PC-3 (cell line): ENCODE measurements at regions of chrX and their contacts with region 1.

Region 1: DNA sequence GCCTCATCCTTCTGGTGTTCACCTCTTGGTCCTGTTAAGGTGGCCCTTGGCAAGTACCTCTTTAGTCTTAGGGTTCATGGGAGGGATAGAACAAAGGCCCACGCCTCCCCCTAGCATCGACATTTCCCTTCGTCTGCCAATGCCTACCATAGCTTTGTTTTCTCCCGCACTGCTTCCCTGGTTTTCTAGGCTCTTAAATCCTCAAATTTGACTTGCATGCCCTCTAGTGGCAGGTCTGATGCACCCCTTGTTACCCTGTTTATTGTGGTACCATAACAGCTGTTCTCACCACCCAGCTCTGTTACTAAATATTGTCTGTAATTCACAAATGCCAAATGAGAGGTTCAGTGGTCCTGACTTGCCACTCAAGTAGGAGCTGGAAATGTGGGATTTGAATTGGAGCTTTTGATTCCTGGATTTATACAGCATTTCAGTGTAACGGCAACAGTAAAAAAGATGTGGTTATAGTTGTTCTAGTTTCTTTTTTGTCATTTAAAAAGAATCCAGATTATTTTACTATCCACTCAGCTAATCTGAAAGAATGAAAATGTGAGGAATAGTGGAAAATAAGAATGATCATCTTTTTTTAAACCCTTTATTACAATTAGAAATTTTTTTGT is 100.1 kb downstream of the REPS2 start:
- DNase-seq: peak; percentile 77
- ATAC-seq: peak; percentile 85
- H3K4me3 ChIP-seq: no peak overlapping the region
- H3K27ac ChIP-seq: no peak overlapping the region
- H3K4me1 ChIP-seq: no peaks in the 10 kb centered on the region
- H3K27me3 ChIP-seq: no peaks in the 10 kb centered on the region
- CTCF ChIP-seq: peak; percentile 83

Region 2: DNA sequence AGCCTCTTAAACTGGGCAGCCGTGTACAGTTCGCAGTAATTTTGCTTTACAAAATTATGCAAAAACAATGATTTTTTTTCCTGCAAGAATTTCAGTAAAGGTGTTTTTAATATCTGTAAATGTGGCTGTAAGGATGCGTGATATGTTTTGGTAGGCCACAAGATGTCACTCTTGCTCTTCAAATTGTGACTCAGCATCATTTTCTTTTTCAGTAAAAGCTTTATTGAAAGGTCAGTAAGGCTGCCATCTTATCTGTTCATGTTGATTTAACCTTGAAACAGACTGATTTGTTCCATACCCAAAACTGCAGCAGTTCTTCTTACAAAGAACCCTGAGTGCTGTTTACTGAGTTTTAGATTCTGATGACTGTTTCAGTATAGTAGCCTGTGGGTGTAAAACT is 220.4 kb before region 1 on chrX:
- CTCF ChIA-PET with region 1: no interaction called
- POLR2A ChIA-PET with region 1: interaction called, 8 read pairs
- intact Hi-C with region 1: loop called (anchors 2 kb)
- DNase-seq: peak; percentile 54
- ATAC-seq: peak; percentile 20; the same call in 1 of the 2 replicates
- H3K4me3 ChIP-seq: no peak overlapping the region
- H3K27ac ChIP-seq: peak overlapping the region; percentile 77
- H3K4me1 ChIP-seq: peaks cover 40% of the 10 kb centered on the region
- H3K27me3 ChIP-seq: no peaks in the 10 kb centered on the region
- CTCF ChIP-seq: peak; percentile 70

Region 3: DNA sequence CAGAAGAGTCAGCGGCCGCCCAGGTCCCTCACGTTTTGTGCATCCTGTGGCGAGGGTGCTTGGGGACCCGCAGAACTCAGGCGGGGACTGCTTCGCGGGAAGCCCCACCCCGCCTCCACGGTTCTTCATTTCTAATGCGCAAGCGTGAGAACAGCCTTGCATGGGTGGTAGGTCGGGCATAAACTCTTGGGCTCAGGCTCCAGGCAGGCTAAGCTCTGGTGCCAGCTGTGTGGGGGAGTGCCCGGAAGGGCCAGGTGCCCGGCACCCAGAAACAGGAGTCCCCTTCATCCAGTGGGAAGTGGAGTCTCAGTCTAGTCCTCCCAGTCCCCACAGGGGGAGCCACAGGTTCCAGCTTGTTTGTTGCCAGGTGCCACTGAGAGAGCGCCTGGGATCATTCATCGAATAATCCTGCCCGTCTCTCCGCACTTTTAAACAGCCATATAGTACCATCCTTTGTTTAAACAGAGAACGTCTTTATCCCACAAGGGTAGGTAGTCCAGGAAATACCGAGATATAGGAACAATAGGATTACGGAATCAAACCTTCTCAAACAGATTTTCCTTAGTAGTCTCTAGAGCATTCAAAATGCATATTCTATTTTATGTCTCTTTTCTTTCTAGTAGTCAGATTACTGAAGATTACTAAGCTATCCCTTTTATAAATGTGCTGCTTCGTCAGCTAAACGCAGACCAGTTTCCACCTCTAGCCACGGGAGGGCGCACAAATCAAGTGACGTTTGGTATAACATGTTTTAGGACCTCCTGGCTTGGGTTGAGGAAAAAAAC is 163.7 kb before region 1 on chrX:
- CTCF ChIA-PET with region 1: interaction called, 51 read pairs
- POLR2A ChIA-PET with region 1: no interaction called
- intact Hi-C with region 1: loop called (anchors 1 kb)
- DNase-seq: peak; percentile 85
- ATAC-seq: peak; percentile 81
- H3K4me3 ChIP-seq: peak overlapping the region; percentile 74
- H3K27ac ChIP-seq: peak overlapping the region; percentile 13; the same call in 1 of the 2 replicates
- H3K4me1 ChIP-seq: peaks cover 3% of the 10 kb centered on the region; the same call in 1 of the 2 replicates
- H3K27me3 ChIP-seq: no peaks in the 10 kb centered on the region
- CTCF ChIP-seq: peak; percentile 81

Region 4: GRCh38 chrX:16892504-16893362 is 153.9 kb before region 1 on chrX:
- CTCF ChIA-PET with region 1: interaction called, 11 read pairs
- POLR2A ChIA-PET with region 1: no interaction called
- intact Hi-C with region 1: no loop called
- DNase-seq: peak; percentile 85
- ATAC-seq: peak; percentile 91
- H3K4me3 ChIP-seq: peak overlapping the region; percentile 30; the same call in 1 of the 2 replicates
- H3K27ac ChIP-seq: no peak overlapping the region
- H3K4me1 ChIP-seq: no peaks in the 10 kb centered on the region
- H3K27me3 ChIP-seq: no peaks in the 10 kb centered on the region
- CTCF ChIP-seq: peak; percentile 91

Region 5: GRCh38 chrX:16963216-16963615 is 83.4 kb before region 1 on chrX:
- CTCF ChIA-PET with region 1: no interaction called
- POLR2A ChIA-PET with region 1: no interaction called
- intact Hi-C with region 1: no loop called
- DNase-seq: no peak
- ATAC-seq: no peak
- H3K4me3 ChIP-seq: no peak overlapping the region
- H3K27ac ChIP-seq: no peak overlapping the region
- H3K4me1 ChIP-seq: no peaks in the 10 kb centered on the region
- H3K27me3 ChIP-seq: no peaks in the 10 kb centered on the region
- CTCF ChIP-seq: no peak

Region 6: DNA sequence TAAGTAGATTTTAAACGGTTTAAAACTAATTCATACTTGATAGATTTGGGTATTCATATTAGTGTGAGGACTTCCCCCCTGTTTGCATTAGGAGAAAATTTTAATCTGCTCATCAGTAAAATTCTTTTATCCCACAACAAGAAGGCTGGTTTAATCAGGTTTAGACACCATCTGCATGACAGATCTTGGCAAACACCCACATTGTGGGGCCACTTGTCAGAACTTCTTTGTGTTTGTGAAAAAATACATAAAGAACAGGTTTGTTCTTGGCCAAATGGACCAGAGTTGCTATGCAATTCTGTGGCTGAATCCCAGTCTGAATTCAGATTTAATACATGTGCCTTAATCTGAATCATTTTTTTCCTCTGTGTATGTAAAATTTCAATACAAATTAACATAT is 20.9 kb after region 1 on chrX:
- CTCF ChIA-PET with region 1: no interaction called
- POLR2A ChIA-PET with region 1: no interaction called
- intact Hi-C with region 1: no loop called
- DNase-seq: no peak
- ATAC-seq: no peak
- H3K4me3 ChIP-seq: no peak overlapping the region
- H3K27ac ChIP-seq: no peak overlapping the region
- H3K4me1 ChIP-seq: no peaks in the 10 kb centered on the region
- H3K27me3 ChIP-seq: no peaks in the 10 kb centered on the region
- CTCF ChIP-seq: no peak

Region 7: DNA sequence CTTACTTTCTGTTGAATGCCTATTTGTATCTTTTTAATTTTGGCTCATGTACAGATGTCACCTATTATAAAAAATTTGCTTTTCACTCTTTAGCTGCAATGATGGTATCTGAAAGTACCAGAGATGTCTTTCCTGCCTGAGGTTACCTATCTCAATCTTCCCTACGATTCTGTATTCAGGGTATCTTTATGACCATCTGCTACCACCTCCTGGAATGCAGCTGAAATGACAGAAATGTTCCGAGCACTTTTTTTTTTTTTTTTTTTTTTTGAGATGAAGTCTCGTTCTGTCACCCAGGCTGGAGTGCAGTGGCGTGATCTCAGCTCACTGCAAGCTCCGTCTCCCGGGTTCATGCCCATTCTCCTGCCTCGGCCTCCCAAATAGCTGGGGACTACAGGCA is 36.2 kb after region 1 on chrX:
- CTCF ChIA-PET with region 1: interaction called, 7 read pairs
- POLR2A ChIA-PET with region 1: interaction called, 7 read pairs
- intact Hi-C with region 1: loop called (anchors 1 kb)
- DNase-seq: peak; percentile 61
- ATAC-seq: peak; percentile 59
- H3K4me3 ChIP-seq: peak overlapping the region; percentile 35; the same call in 1 of the 2 replicates
- H3K27ac ChIP-seq: no peak overlapping the region
- H3K4me1 ChIP-seq: peaks cover 12% of the 10 kb centered on the region
- H3K27me3 ChIP-seq: no peaks in the 10 kb centered on the region
- CTCF ChIP-seq: no peak; the same call in 1 of the 2 replicates